RWPE1 (cell line): ENCODE measurements at regions of chr2 and their contacts with region 1.

Region 1: DNA sequence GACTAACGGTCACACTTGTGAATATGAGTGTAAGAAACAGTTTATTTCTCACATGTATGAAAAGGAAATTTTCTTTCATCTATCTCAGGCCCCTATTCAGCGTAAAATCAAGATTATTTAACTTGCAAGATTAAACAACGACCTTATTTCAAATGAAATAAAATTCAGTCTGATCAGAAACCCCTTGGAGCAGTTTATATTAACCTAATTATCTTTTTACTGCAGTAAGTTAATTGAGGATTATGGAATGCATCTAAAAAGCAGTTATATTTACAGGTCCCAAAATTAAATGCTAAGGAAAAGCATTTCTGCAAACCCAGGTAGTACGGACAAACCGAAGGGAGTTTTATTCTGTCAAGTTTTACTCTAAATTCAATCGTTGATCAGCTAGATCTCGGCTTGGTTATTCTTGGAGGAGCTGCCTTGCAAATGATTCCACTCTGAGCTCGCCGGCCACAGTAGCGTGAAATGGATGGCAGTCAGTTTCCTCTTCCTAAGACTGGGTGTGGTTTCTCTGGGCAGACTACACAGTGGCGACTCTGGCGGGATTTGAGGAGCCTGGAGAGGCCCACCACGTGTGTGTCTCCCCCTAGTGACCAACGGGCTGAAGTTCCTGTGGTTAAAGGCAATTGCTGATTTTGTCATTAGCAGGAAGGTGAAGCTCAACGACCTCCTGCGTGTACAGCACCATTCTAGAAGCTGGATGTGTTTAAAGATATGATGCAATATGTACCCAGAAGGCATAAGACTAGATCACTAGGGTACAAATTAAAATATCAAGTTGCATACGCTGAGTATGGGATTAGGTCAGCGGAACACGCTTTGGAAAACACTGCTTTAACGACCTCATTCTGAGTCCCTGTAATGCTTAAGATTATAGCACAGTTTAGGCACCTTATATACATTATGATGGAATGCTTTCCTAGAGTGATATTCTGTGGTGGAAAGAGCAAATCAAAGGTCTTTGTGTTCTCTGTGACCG is 36.4 kb downstream of the PRKRA start:
- DNase-seq: peak; percentile 86
- H3K27ac ChIP-seq: peak overlapping the region; percentile 94
- CTCF ChIP-seq: peak; percentile 93

Region 2: GRCh38 chr2:178112202-178113152 is 302.1 kb before region 1 on chr2 and contains the start of gene RBM45:
- CTCF ChIA-PET with region 1: interaction called, 21 read pairs
- POLR2A ChIA-PET with region 1: no interaction called
- DNase-seq: peak; percentile 96
- H3K27ac ChIP-seq: peak within 1 kb of the TSS; percentile 82
- CTCF ChIP-seq: peak; percentile 97

Region 3: DNA sequence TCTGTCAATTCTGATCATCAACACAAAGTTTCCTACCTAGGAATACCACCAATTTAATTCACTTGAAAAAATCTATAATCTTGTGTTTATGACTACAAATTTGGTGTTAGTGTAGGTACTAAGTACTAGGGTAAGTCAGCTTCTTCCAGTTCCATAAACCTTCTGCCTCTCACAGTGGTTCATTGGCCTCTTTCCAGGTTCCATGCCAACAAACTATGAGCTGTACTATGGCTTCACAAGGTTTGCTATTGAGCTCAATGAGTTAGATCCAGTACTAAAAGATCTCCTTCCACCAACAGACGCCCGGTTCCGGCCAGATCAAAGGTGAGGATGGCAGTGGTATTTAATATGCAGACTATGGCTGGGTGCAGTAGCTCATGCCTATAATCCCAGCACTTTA is 22.3 kb before region 1 on chr2:
- CTCF ChIA-PET with region 1: interaction called, 10 read pairs
- POLR2A ChIA-PET with region 1: interaction called, 10 read pairs
- DNase-seq: no peak
- H3K27ac ChIP-seq: no peak overlapping the region
- CTCF ChIP-seq: no peak

Region 4: GRCh38 chr2:178404368-178404767 is 10.2 kb before region 1 on chr2:
- CTCF ChIA-PET with region 1: interaction called, 14 read pairs
- POLR2A ChIA-PET with region 1: interaction called, 3 read pairs
- DNase-seq: no peak
- H3K27ac ChIP-seq: no peak overlapping the region
- CTCF ChIP-seq: no peak